ENCODE measurements at regions of chr5 and their contacts with region 1.

Region 1: DNA sequence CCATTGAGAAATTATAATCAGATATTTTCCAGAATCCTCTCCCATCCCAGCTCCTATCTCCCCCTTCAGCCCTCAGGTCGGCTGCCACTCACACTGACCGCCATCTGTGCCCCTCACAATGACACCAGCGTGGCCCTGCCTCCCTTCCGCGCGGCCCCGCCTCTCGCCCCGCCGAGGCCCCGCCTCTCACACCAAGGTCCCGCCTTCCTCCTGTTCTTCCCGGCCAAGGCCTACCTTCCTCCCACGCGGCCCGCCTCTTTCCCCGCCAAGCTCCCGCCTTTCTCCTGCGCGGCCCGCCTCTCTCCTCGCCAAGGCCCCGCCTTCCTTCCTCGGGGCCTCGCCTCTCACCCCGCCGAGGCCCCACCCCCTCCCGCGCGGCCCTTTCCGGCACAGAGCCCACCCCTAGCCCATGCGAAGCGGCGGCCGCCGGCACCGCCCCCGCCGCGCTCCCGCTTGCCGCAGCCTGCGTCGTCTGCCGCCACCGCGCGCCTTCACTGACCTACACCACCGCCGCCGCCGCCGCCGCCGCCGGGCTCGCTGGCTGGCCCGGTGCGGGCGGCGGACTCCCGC is at the start of gene DNAJC21:
- DNase-seq: peak; percentile 98
- ATAC-seq: peak; percentile 98
- total RNA-seq, gene DNAJC21: 55.5 TPM

Region 2: GRCh38 chr5:34915139-34915855 is 13.9 kb before region 1 on chr5 and contains the starts of genes BRIX1 and RAD1:
- intact Hi-C with region 1: loop called (anchors 1 kb)
- DNase-seq: peak; percentile 99
- ATAC-seq: peak; percentile 100
- total RNA-seq, gene BRIX1: 10.3 TPM
- total RNA-seq, gene RAD1: 22.7 TPM

Measured in Right ventricle myocardium inferior (tissue), 1 donor.